ENCODE measurements at regions of chr19 and their contacts with region 1.

Region 1: GRCh38 chr19:12666265-12667048 is at the starts of genes MAN2B1 and WDR83:
- DNase-seq: peak; percentile 73
- H3K4me3 Mint-ChIP-seq: peak within 1 kb of the TSS; percentile 93
- H3K27ac Mint-ChIP-seq: peak within 1 kb of the TSS; percentile 91
- H3K4me1 Mint-ChIP-seq: peaks cover 37% of the 10 kb centered on the region
- H3K27me3 Mint-ChIP-seq: no peaks in the 10 kb centered on the region
- total RNA-seq, gene MAN2B1: 133 and 147 TPM in 2 replicates
- total RNA-seq, gene WDR83: 23.1 and 23.7 TPM in 2 replicates

Region 2: DNA sequence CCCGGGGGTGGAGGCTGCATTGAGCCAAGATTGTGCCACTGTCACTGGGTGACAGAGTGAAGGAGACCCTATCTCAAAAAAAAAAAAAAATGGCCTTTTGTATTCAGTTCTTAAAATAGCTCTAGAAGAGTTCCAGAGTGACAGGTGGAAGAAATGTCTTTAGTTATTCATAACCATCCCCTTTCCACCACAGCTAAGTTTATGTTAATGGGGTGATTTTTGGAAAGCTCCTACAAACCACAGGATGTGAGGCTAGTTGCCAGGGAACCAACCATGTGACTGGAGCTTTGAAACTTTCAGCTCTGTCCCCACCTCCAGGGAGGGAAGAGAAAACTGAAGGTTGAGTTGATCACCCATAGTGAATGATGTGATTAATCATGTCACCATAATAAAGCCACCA is 62.7 kb before region 1 on chr19:
- intact Hi-C with region 1: loop called (anchors 2 kb)
- DNase-seq: peak; percentile 56
- H3K4me3 Mint-ChIP-seq: no peak overlapping the region
- H3K27ac Mint-ChIP-seq: peak overlapping the region; percentile 12
- H3K4me1 Mint-ChIP-seq: peaks cover 8% of the 10 kb centered on the region
- H3K27me3 Mint-ChIP-seq: no peaks in the 10 kb centered on the region

Region 3: DNA sequence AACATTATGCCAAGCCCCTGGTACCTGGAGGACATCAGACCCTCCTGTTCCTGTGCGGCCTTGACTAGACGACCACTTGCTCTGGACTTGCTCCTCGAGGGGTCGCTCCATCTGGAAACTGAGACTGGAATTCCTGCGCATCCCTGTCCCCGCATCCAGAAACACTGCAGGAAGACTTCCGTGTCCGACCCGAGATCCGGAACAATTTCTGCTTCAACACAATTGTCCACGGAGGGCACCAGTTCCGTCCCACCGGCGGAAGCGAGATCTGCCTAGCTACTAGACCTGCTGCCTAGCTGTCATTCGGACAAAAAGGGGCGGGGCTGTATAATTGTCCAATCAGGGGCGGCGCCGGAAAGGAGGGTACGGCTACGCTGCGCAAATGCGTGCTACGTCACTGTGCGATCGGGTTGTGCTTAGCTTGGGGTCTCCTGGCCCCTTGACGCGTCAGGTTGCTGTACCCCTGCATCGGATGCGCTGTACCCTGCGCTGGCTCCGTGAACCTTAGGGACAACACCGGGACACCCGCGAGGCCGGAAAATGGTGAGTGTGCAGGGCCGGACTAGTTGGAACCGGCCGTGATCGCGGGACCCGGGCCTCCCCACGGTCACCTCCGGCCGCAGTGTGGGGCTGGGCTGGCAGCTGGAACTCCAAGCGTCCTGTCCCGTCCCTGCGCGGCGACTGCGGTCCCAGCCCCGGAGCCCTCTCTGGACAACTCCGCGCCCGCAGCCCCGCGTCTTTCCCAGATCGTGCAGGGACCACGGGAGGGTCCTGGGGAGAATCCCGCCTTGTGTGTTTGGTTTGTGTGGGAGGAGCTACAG is 55.7 kb before region 1 on chr19 and contains the starts of genes ZNF490 and ZNF791:
- intact Hi-C with region 1: loop called (anchors 1 kb)
- DNase-seq: peak; percentile 95
- H3K4me3 Mint-ChIP-seq: peak within 1 kb of the TSS; percentile 99
- H3K27ac Mint-ChIP-seq: peak within 1 kb of the TSS; percentile 97
- H3K4me1 Mint-ChIP-seq: peaks cover 18% of the 10 kb centered on the region
- H3K27me3 Mint-ChIP-seq: no peaks in the 10 kb centered on the region
- total RNA-seq, gene ZNF490: 7.0 and 9.9 TPM in 2 replicates
- total RNA-seq, gene ZNF791: 21.8 and 22.5 TPM in 2 replicates

Region 4: GRCh38 chr19:12639901-12640613 is 26.4 kb before region 1 on chr19:
- intact Hi-C with region 1: loop called (anchors 1 kb)
- DNase-seq: peak; percentile 79
- H3K4me3 Mint-ChIP-seq: peak overlapping the region; percentile 63
- H3K27ac Mint-ChIP-seq: peak overlapping the region; percentile 78
- H3K4me1 Mint-ChIP-seq: peaks cover 8% of the 10 kb centered on the region
- H3K27me3 Mint-ChIP-seq: no peaks in the 10 kb centered on the region